Naive thymus-derived CD4-positive, alpha-beta T cell (primary cell): ENCODE measurements at regions of chr1 and their contacts with region 1.

Region 1: GRCh38 chr1:97814121-97814520 is 106.7 kb downstream of the DPYD start:
- DNase-seq: no peak
- ATAC-seq: no peak
- H3K4me3 ChIP-seq: no peak overlapping the region
- H3K4me3 Mint-ChIP-seq: no peak overlapping the region
- H3K27ac ChIP-seq: no peak overlapping the region
- H3K27ac Mint-ChIP-seq: no peak overlapping the region
- H3K4me1 ChIP-seq: no peaks in the 10 kb centered on the region
- H3K4me1 Mint-ChIP-seq: peaks cover 0 to 15% (median 11%) of the 10 kb centered on the region in 7 donors
- H3K27me3 ChIP-seq: no peaks in the 10 kb centered on the region
- H3K27me3 Mint-ChIP-seq: no peaks in the 10 kb centered on the region

Region 2: GRCh38 chr1:96966536-96967138 is 847.5 kb before region 1 on chr1:
- CTCF ChIA-PET with region 1: no interaction called
- POLR2A ChIA-PET with region 1: no interaction called
- intact Hi-C with region 1: loop called in 1 of 2 experiments (anchors 10 kb)
- DNase-seq: peak; percentile 30 to 71 (median 60)
- ATAC-seq: peak; percentile 82
- H3K4me3 ChIP-seq: no peak overlapping the region
- H3K4me3 Mint-ChIP-seq: no peak overlapping the region
- H3K27ac ChIP-seq: no peak overlapping the region
- H3K27ac Mint-ChIP-seq: no peak overlapping the region
- H3K4me1 ChIP-seq: no peaks in the 10 kb centered on the region
- H3K4me1 Mint-ChIP-seq: no peaks in the 10 kb centered on the region
- H3K27me3 ChIP-seq: no peaks in the 10 kb centered on the region
- H3K27me3 Mint-ChIP-seq: peaks cover 7 to 55% (median 28%) of the 10 kb centered on the region in 5 donors

Region 3: DNA sequence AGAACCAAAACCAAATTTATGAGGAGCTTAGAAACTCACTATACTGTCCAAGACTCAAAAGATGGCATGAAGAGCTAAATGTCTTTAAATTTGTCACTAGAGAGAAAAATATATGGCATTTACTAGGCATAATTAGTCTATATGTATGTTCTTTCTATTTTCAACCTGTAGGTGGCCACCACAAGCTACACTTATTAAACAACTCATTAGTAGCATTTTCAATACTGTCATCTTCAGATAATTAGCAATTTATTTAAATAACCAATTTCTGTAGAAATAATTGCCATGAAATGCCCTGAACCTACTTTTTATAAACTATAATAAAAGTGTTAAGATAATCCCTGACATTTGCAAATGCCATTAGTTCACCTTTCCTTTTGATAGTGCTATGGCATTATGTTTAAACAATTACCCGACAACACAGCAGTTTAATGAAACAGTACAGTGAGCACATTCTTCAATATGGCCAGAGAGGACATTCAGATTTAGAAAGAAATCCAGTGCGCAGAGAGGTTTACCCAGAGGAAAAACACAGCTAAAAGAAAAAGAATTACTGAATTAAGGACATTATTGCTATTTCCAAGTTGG is 570.1 kb before region 1 on chr1:
- CTCF ChIA-PET with region 1: no interaction called
- POLR2A ChIA-PET with region 1: no interaction called
- intact Hi-C with region 1: loop called in 1 of 2 experiments (anchors 5 kb)
- DNase-seq: no peak
- ATAC-seq: no peak
- H3K4me3 ChIP-seq: no peak overlapping the region
- H3K4me3 Mint-ChIP-seq: no peak overlapping the region
- H3K27ac ChIP-seq: no peak overlapping the region
- H3K27ac Mint-ChIP-seq: peak overlapping the region in 1 of 9 donors; percentile 25
- H3K4me1 ChIP-seq: no peaks in the 10 kb centered on the region
- H3K4me1 Mint-ChIP-seq: no peaks in the 10 kb centered on the region
- H3K27me3 ChIP-seq: no peaks in the 10 kb centered on the region
- H3K27me3 Mint-ChIP-seq: no peaks in the 10 kb centered on the region

Region 4: DNA sequence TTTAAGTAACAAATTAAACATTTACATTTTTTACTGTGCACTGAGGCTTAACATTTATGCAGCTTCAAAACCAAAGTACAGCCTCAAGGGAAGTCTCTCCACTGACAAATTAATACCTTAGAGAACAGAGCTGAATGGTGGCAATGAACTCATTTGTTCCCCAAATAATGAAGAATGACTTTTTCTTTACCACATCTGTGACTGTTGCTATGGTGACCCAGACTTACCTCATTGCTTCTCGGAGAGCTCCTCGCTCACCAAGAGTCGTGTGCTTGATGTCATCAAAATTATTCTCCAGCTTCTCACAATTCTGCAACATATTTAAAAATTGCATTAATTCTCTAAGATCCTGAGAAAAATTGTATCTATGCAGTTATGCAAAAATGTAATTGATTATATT is 13.8 kb after region 1 on chr1:
- CTCF ChIA-PET with region 1: no interaction called
- POLR2A ChIA-PET with region 1: no interaction called
- intact Hi-C with region 1: loop called in 1 of 2 experiments (anchors 2 kb)
- DNase-seq: peak in 2 of 9 donors; percentile 9 to 20
- ATAC-seq: no peak
- H3K4me3 ChIP-seq: no peak overlapping the region
- H3K4me3 Mint-ChIP-seq: no peak overlapping the region
- H3K27ac ChIP-seq: no peak overlapping the region
- H3K27ac Mint-ChIP-seq: no peak overlapping the region
- H3K4me1 ChIP-seq: no peaks in the 10 kb centered on the region
- H3K4me1 Mint-ChIP-seq: peaks cover 5 to 14% (median 6%) of the 10 kb centered on the region in 7 donors
- H3K27me3 ChIP-seq: no peaks in the 10 kb centered on the region
- H3K27me3 Mint-ChIP-seq: no peaks in the 10 kb centered on the region

Region 5: DNA sequence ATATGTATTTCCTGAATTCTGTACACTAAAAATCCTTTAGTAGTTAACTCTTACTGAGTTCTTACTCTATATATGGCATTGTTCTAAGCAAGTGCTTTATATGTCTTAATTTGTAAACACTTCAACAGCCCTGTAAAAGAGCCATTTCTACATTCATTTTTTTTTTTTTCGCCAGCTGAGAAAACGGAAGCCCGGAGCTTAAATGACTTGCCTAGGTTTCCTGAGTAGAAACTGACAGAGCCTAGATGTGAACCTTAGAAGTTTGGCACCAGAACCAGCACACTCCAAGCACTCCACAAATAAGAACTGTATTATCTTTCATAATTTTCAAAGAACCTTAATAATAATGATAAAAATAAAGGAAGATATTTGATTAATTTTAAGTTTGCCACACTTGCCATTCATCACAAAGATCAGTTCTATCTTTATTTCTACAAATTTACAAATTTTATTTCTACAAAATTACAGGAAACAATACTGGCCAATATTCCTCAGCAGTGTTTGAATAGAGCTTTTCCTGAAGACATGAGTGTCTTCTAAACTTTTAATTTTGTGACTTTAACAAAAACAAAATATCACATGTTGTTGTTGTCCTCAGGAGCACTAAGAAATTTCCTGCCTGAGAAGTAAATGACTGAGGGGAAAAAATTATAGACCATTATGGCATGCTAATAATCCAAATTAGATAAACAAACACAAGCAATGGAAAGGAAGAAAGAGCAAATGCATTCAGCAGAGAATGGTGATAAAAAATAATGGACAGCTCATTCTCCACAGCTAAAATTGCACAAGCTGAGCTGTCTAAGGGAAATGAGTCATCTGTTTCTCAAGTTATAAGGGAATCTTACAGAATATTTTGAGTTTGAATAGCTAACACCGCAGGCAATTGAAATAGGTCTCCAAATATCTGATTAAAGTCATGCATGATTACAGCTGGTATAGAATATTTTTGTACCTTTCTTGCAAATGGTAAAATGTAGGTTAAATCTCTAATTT is 35.5 kb after region 1 on chr1:
- CTCF ChIA-PET with region 1: no interaction called
- POLR2A ChIA-PET with region 1: no interaction called
- intact Hi-C with region 1: no loop called
- DNase-seq: peak in 2 of 9 donors; percentile 2 to 5
- ATAC-seq: peak; percentile 55
- H3K4me3 ChIP-seq: no peak overlapping the region
- H3K4me3 Mint-ChIP-seq: peak overlapping the region in 5 of 10 donors; percentile 9 to 48 (median 31)
- H3K27ac ChIP-seq: no peak overlapping the region
- H3K27ac Mint-ChIP-seq: peak overlapping the region in 1 of 9 donors; percentile 22
- H3K4me1 ChIP-seq: peaks cover 0 to 5% of the 10 kb centered on the region in 2 donors
- H3K4me1 Mint-ChIP-seq: peaks cover 18 to 51% (median 37%) of the 10 kb centered on the region in 7 donors
- H3K27me3 ChIP-seq: no peaks in the 10 kb centered on the region
- H3K27me3 Mint-ChIP-seq: no peaks in the 10 kb centered on the region